H1 (cell line): ENCODE measurements at regions of chr3 and their contacts with region 1.

Region 1: DNA sequence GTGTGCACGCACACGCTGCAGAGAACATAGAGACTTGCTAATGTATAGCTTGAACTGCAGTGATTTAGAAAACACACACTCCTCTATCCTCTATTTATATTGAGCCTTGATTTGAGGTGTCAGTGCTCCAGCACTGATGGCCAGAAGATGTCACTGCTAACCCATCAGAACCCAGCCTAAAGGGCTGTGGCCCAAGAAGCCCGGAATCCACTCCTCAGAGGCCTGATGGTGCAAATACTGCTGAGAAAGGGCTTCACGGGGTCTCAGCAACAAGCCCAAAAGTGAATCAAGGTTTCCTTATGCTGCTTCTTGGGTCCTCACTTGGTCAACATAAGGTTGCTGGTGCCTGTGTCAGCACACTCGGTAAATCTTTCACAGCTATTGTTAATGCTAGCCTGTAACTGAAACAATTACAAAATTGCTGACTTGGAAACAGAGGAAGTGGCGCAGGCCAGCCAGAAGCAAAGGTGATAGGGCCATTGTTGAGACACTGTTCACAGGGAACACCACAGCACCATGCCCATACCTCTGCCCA is 60.3 kb downstream of the HEG1 start:
- DNase-seq: peak; percentile 29 to 69
- H3K4me3 ChIP-seq: no peak overlapping the region
- H3K27ac ChIP-seq: no peak overlapping the region
- H3K4me1 ChIP-seq: peaks cover 8 to 20% (median 12%) of the 10 kb centered on the region in 4 experiments
- H3K27me3 ChIP-seq: no peaks in the 10 kb centered on the region
- CTCF ChIP-seq: peak; percentile 68 to 94 (median 90)
- EP300 ChIP-seq: no peak
- POLR2A ChIP-seq: no peak
- RAD21 ChIP-seq: peak; percentile 98 to 99

Region 2: DNA sequence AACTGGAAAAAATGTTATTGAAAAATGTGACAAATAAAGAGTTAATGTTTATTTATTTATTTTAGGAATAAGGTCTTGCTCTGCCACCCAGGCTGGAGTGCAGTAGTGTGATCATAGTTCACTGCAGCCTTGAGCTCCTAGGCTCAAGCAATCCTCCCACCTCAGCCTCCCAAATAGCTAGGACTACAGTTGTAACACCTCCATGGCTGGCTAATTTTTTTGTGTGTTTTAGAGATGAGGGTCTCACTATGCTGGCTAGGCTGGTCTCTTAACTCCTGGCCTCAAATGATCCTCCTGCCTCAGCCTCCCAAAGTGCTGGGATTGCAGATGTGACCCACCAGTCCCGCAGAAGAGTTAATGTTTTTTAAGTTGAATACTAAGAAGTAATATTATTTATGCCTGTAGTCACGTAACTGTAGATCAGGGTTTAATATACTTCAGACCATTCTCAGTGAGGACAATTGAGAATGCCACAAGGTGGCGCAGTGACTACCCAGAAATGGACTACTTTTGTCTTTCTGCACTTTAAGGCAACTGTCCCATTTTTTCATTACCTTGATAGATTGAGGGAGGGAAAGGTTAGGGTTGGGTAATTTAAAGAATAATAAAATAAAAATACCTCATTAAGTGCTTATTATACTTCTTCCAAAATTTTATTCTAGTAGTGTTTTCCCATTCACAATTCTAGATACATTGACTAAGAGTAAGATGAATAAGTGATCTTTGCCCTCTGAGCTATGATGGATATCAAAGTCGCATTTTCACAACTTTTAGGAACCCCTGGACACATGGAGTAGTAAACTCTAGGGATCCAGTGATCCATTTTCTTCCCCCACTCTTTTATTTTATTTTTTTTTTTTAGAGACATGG is 67.0 kb before region 1 on chr3:
- CTCF ChIA-PET with region 1: interaction called, 11 read pairs
- POLR2A ChIA-PET with region 1: no interaction called
- DNase-seq: peak in 1 of 2 experiments; percentile 66
- H3K4me3 ChIP-seq: no peak overlapping the region
- H3K27ac ChIP-seq: no peak overlapping the region
- H3K4me1 ChIP-seq: no peaks in the 10 kb centered on the region
- H3K27me3 ChIP-seq: no peaks in the 10 kb centered on the region; a peak in 1 of 7 replicates
- CTCF ChIP-seq: peak in 2 of 3 experiments; percentile 71 to 81; a peak in 3 of 4 replicates
- EP300 ChIP-seq: no peak
- POLR2A ChIP-seq: no peak
- RAD21 ChIP-seq: peak; percentile 72 to 78

Region 3: DNA sequence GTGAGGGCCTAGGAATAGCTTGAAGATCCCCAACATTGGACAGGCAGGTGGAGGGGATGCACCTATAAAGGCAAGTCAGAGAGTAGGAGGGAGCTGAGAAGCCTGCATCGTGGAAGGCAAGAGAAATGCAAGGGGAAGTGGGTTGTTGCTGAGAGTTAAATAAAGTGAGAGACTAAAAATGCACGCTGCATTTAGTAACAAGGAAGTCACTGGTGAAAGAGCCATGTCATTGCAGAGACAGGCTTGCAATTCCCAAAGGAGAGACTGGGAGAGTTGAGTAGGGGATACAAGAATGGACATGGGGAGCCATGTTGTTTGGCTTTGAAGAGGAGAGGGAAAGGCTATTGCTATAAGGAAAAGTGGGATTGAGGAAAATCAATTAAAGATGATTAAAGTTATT is 137.3 kb after region 1 on chr3:
- CTCF ChIA-PET with region 1: no interaction called
- POLR2A ChIA-PET with region 1: no interaction called
- DNase-seq: no peak
- H3K4me3 ChIP-seq: no peak overlapping the region
- H3K27ac ChIP-seq: no peak overlapping the region
- H3K4me1 ChIP-seq: peaks cover 0 to 6% (median 2%) of the 10 kb centered on the region in 4 experiments; a peak in 2 of 7 replicates
- H3K27me3 ChIP-seq: no peaks in the 10 kb centered on the region
- CTCF ChIP-seq: no peak
- EP300 ChIP-seq: no peak
- POLR2A ChIP-seq: no peak
- RAD21 ChIP-seq: no peak

Region 4: DNA sequence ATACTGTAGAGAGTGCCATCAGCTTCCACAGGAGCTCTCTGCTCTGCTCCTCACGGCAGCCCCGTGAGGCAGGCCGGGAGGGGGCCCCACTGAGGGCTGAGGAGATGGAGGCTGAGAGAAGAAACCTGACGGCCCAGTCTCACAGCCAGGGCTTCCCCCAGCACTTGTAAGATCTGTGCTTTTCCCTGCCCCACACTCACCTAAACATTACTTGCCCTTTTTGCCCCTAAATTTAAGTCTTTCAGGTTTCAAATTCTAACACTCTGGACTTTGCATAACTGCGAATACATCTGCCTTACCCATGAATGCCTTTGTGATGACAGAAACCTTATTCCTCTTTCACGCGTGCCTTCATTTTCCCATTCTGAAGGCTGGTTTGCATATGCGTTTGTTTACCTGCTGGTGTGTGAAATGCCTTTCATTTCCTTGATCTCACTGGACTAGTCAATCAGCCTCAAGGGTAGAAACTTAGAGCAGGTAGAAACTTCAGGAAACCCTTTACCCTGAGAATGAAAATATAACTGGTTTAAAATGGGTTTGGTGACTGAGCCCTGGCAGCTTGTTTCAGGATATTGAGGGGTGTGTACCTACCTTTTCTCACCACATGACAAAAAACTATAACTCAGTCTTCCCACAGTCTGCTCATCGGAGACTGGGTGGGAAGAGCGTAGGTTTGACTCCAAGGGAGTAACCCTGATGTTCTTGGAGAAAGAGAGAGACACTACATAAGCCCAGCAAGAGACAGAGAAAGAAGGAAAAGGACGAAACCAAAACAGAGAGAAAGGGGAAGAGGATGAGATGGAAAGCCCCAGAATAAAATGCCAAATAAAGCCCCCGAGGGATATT is 196.9 kb after region 1 on chr3:
- CTCF ChIA-PET with region 1: interaction called, 19 read pairs
- POLR2A ChIA-PET with region 1: no interaction called
- DNase-seq: no peak
- H3K4me3 ChIP-seq: no peak overlapping the region
- H3K27ac ChIP-seq: no peak overlapping the region; the same call in 1 of the 2 replicates
- H3K4me1 ChIP-seq: peaks cover 0 to 10% (median 6%) of the 10 kb centered on the region in 4 experiments; a peak in 6 of 7 replicates
- H3K27me3 ChIP-seq: no peaks in the 10 kb centered on the region
- CTCF ChIP-seq: peak; percentile 34 to 42 (median 40); a peak in 3 of 4 replicates
- EP300 ChIP-seq: no peak
- POLR2A ChIP-seq: no peak
- RAD21 ChIP-seq: peak in 1 of 2 experiments; percentile 51; a peak in 2 of 4 replicates

Region 5: GRCh38 chr3:125202197-125202596 is 206.7 kb after region 1 on chr3:
- CTCF ChIA-PET with region 1: interaction called, 21 read pairs
- POLR2A ChIA-PET with region 1: no interaction called
- DNase-seq: no peak
- H3K4me3 ChIP-seq: no peak overlapping the region
- H3K27ac ChIP-seq: no peak overlapping the region
- H3K4me1 ChIP-seq: no peaks in the 10 kb centered on the region
- H3K27me3 ChIP-seq: no peaks in the 10 kb centered on the region
- CTCF ChIP-seq: peak in 2 of 3 experiments; percentile 57 to 70; a peak in 3 of 4 replicates
- EP300 ChIP-seq: no peak
- POLR2A ChIP-seq: no peak
- RAD21 ChIP-seq: peak; percentile 77 to 81

Region 6: GRCh38 chr3:126208618-126209256 is 1213.2 kb after region 1 on chr3:
- CTCF ChIA-PET with region 1: no interaction called
- POLR2A ChIA-PET with region 1: no interaction called
- DNase-seq: no peak
- H3K4me3 ChIP-seq: no peak overlapping the region
- H3K27ac ChIP-seq: no peak overlapping the region
- H3K4me1 ChIP-seq: peaks cover 0 to 8% (median 4%) of the 10 kb centered on the region in 4 experiments; a peak in 6 of 7 replicates
- H3K27me3 ChIP-seq: peaks cover 0 to 7% (median 2%) of the 10 kb centered on the region in 4 experiments; a peak in 5 of 7 replicates
- CTCF ChIP-seq: no peak
- EP300 ChIP-seq: no peak
- POLR2A ChIP-seq: no peak
- RAD21 ChIP-seq: no peak